ENCODE measurements at regions of chr7 and their contacts with region 1.

Region 1: GRCh38 chr7:5494683-5495561 is 71.3 kb upstream of the TNRC18 start:
- DNase-seq: peak; percentile 95
- H3K4me3 ChIP-seq: peak overlapping the region in 1 of 2 experiments; percentile 36; a peak in 1 of 4 replicates
- H3K27ac ChIP-seq: 0 out of 4 replicates have a peak overlapping the region, but pooled peaks of 1 of the 2 experiments have one; percentile 1
- H3K4me1 ChIP-seq: peaks cover 5 to 30% of the 10 kb centered on the region in 2 experiments; a peak in 3 of 4 replicates
- H3K27me3 ChIP-seq: no peaks in the 10 kb centered on the region
- CTCF ChIP-seq: peak; percentile 99
- EP300 ChIP-seq: no peak
- RAD21 ChIP-seq: peak; percentile 98

Region 2: GRCh38 chr7:5363729-5364128 is 131.2 kb before region 1 on chr7:
- CTCF ChIA-PET with region 1: interaction called, 16 read pairs
- POLR2A ChIA-PET with region 1: no interaction called
- DNase-seq: no peak
- H3K4me3 ChIP-seq: no peak overlapping the region
- H3K27ac ChIP-seq: no peak overlapping the region
- H3K4me1 ChIP-seq: no peaks in the 10 kb centered on the region
- H3K27me3 ChIP-seq: no peaks in the 10 kb centered on the region
- CTCF ChIP-seq: no peak
- EP300 ChIP-seq: no peak
- RAD21 ChIP-seq: no peak

Region 3: DNA sequence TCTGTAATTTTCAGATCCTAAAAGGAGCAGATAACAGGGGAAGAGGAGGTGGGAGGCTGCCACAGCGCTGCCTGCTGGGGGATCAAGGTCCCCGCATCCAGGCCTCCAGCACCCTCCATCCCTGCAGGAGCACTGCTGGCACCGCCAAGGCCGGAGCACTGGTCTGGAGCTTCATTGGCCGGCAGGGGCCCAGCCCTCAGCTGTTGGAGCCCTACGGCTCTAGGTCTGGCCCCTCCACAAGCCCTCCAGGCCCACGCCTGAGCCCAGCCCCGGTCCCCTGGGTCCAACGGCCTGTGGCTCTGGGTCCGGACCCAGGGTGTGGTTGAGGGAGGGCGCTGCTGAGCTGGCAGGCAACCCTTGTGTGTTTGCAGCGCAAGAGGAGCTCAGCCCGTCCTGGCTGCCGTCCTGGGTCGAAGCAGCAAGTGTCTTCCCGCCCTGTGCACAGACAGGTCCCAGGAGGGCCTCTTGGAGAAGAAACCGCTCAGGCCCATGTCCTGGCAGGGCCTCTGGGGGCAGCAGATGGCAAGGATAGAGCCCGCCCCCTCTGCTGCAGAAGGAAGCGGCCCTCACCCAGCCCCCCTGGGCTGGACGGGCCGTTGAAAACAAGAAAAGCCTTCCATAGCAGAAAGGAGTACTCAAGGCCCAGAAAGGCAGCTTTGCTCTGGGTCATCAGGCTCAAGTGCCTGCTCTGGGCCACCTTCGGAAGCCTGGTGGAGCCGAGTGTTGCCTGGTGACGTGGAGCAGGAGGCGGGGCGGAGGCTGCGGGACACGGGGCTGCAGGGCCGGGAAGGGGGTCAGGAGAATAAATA is 17.0 kb before region 1 on chr7:
- CTCF ChIA-PET with region 1: interaction called, 35 read pairs
- POLR2A ChIA-PET with region 1: no interaction called
- DNase-seq: peak; percentile 88
- H3K4me3 ChIP-seq: no peak overlapping the region
- H3K27ac ChIP-seq: peak overlapping the region in 1 of 2 experiments; percentile 64; a peak in 1 of 4 replicates
- H3K4me1 ChIP-seq: peaks cover 0 to 26% of the 10 kb centered on the region in 2 experiments; a peak in 1 of 4 replicates
- H3K27me3 ChIP-seq: no peaks in the 10 kb centered on the region
- CTCF ChIP-seq: peak; percentile 15; the same call in 1 of the 2 replicates
- EP300 ChIP-seq: no peak
- RAD21 ChIP-seq: peak; percentile 9; the same call in 1 of the 2 replicates

Region 4: GRCh38 chr7:5517057-5517456 is 22.1 kb after region 1 on chr7:
- CTCF ChIA-PET with region 1: interaction called, 11 read pairs
- POLR2A ChIA-PET with region 1: no interaction called
- DNase-seq: no peak
- H3K4me3 ChIP-seq: no peak overlapping the region
- H3K27ac ChIP-seq: no peak overlapping the region
- H3K4me1 ChIP-seq: peaks cover 4 to 8% of the 10 kb centered on the region in 2 experiments; a peak in 2 of 4 replicates
- H3K27me3 ChIP-seq: no peaks in the 10 kb centered on the region
- CTCF ChIP-seq: no peak
- EP300 ChIP-seq: no peak
- RAD21 ChIP-seq: no peak

Region 5: GRCh38 chr7:5665094-5666025 is 170.4 kb after region 1 on chr7:
- CTCF ChIA-PET with region 1: interaction called, 96 read pairs
- POLR2A ChIA-PET with region 1: interaction called, 3 read pairs
- DNase-seq: peak; percentile 80
- H3K4me3 ChIP-seq: no peak overlapping the region; a peak in 1 of 4 replicates
- H3K27ac ChIP-seq: 0 out of 4 replicates have a peak overlapping the region, but pooled peaks have one; percentile 9 to 11
- H3K4me1 ChIP-seq: peaks cover 6 to 35% of the 10 kb centered on the region in 2 experiments; a peak in 2 of 4 replicates
- H3K27me3 ChIP-seq: no peaks in the 10 kb centered on the region
- CTCF ChIP-seq: peak; percentile 99
- EP300 ChIP-seq: no peak
- RAD21 ChIP-seq: peak; percentile 100

Region 6: GRCh38 chr7:5694912-5695726 is 200.2 kb after region 1 on chr7:
- CTCF ChIA-PET with region 1: interaction called, 33 read pairs
- POLR2A ChIA-PET with region 1: no interaction called
- DNase-seq: no peak
- H3K4me3 ChIP-seq: peak overlapping the region in 1 of 2 experiments; percentile 16; a peak in 1 of 4 replicates
- H3K27ac ChIP-seq: peak overlapping the region; percentile 95 to 99
- H3K4me1 ChIP-seq: peaks cover 49 to 80% of the 10 kb centered on the region in 2 experiments
- H3K27me3 ChIP-seq: no peaks in the 10 kb centered on the region
- CTCF ChIP-seq: no peak
- EP300 ChIP-seq: peak in 1 of 2 experiments; percentile 88; a peak in 2 of 4 replicates
- RAD21 ChIP-seq: no peak

Region 7: DNA sequence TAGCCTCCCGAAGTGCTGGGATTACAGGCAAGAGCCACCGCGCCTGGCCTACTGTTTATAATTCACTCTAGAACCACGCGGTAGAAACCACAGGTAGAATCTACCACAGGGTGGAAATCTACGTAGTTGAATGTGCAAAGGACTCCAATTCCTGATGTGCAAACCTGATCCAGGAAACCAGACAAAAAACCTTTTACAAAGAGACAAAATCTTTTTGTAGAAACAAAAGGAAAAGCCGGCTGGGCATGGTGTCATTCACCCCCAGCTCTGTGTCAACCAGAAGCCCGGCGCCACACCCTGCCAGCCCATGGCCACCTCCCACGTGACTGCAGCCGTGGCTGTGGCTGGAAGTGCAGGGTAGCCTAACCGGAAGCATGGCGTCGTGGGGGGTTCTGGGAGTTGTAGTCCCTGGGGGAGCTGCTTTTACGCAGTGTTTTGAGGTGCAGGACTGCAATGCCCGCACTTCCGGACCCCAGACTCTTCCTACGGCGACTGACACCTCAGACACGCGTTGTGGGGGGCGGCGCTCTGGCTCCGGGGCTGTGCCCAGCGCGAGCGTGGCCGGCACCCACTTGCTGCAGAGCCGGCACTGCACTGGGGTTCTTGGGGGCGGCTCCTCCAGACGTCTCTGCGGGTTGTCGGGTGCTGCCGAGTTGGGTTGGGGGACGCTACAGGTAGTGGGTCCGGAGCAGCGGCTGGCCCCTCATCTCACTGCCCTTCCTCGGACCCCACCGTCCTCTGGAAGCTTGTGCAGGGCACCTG is 328.0 kb after region 1 on chr7:
- CTCF ChIA-PET with region 1: no interaction called
- POLR2A ChIA-PET with region 1: no interaction called
- DNase-seq: peak; percentile 98
- H3K4me3 ChIP-seq: peak overlapping the region; percentile 62 to 70
- H3K27ac ChIP-seq: peak overlapping the region; percentile 50 to 62
- H3K4me1 ChIP-seq: peaks cover 3 to 7% of the 10 kb centered on the region in 2 experiments; a peak in 1 of 4 replicates
- H3K27me3 ChIP-seq: no peaks in the 10 kb centered on the region
- CTCF ChIP-seq: no peak
- EP300 ChIP-seq: no peak
- RAD21 ChIP-seq: no peak